ENCODE measurements at regions of chr11 and their contacts with region 1.

Region 1: DNA sequence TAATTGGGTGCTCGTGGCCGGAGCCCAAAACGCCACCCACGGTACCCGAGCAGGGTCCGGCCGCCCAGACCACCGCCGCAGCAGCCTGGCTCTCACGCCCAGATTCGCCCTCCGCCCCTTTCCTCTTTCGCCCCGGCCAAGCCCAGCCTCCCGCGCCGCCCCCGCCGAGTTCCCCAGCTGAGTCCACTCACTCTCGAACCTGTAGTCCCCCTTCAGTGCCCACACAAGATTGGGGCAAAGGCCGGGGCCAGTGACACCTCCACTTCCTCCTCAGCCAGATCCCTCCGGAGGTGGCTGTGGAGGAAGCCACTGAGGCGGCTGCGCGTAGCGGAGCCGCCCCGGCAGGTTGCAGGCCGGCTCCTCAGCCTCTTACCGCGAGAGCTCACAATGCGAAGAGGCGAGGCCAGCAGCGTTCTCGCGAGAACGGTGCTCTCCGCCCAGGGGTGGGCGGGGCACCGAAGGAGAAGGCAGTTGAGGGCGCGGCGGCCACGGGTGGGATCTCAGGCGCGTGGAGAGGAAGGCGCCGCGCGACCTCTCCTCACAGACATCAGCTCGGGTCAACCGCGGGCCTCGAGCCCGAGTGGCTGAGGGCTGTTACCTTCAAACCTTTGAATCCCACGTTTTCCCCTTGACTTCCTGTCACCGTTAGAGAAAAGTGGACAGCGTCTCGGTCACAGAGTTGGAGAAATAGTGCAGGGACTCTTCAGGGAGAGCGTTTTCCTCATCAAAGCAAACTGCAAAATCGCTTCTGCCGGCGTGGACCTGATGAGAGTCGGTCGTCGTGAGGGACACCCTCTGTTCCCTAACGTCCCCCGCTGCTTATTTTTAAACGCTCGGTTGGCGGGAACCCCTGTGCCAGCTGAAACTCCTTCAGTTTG is at the start of gene BTBD10:
- DNase-seq: peak; percentile 96
- H3K4me3 ChIP-seq: peak within 1 kb of the TSS; percentile 97
- H3K27ac ChIP-seq: peak within 1 kb of the TSS; percentile 80
- H3K4me1 ChIP-seq: peaks cover 14% of the 10 kb centered on the region
- H3K27me3 ChIP-seq: no peaks in the 10 kb centered on the region
- CTCF ChIP-seq: no peak
- total RNA-seq, gene BTBD10: 18.0 and 18.4 TPM in 2 replicates

Region 2: GRCh38 chr11:13276832-13277767 is 186.0 kb before region 1 on chr11:
- CTCF ChIA-PET with region 1: no interaction called
- POLR2A ChIA-PET with region 1: no interaction called
- intact Hi-C with region 1: loop called (anchors 10 kb)
- DNase-seq: peak; percentile 97
- H3K4me3 ChIP-seq: peak overlapping the region; percentile 63
- H3K27ac ChIP-seq: no peak overlapping the region
- H3K4me1 ChIP-seq: peaks cover 3% of the 10 kb centered on the region
- H3K27me3 ChIP-seq: peaks cover 71% of the 10 kb centered on the region
- CTCF ChIP-seq: no peak

Region 3: DNA sequence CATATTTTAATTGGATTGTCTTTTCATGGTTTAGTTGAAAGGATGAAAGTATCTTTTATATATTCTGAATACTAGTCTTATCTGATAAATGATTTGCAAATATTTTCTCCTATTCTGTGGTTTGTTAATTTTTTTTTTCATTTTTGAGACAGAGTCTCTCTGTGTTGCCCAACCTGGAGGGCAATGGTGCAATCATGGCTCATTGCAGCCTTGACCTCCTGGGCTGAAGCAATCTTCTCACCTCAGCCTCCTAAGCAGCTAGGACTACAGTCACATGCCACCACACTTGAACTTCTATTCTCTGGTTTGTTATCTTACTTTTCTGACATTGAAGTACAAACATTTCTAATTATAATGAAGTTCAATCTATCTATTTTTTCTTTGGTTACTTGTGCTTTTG is 175.3 kb after region 1 on chr11:
- CTCF ChIA-PET with region 1: no interaction called
- POLR2A ChIA-PET with region 1: no interaction called
- intact Hi-C with region 1: no loop called
- DNase-seq: no peak
- H3K4me3 ChIP-seq: no peak overlapping the region
- H3K27ac ChIP-seq: no peak overlapping the region
- H3K4me1 ChIP-seq: no peaks in the 10 kb centered on the region
- H3K27me3 ChIP-seq: peaks cover 25% of the 10 kb centered on the region
- CTCF ChIP-seq: no peak

Region 4: GRCh38 chr11:13679768-13680167 is 216.6 kb after region 1 on chr11:
- CTCF ChIA-PET with region 1: no interaction called
- POLR2A ChIA-PET with region 1: no interaction called
- intact Hi-C with region 1: no loop called
- DNase-seq: no peak
- H3K4me3 ChIP-seq: no peak overlapping the region
- H3K27ac ChIP-seq: no peak overlapping the region
- H3K4me1 ChIP-seq: peaks cover 52% of the 10 kb centered on the region
- H3K27me3 ChIP-seq: no peaks in the 10 kb centered on the region
- CTCF ChIP-seq: no peak

Measured in A673 (cell line).